ENCODE measurements at regions of chr3 and their contacts with region 1.

Region 1: DNA sequence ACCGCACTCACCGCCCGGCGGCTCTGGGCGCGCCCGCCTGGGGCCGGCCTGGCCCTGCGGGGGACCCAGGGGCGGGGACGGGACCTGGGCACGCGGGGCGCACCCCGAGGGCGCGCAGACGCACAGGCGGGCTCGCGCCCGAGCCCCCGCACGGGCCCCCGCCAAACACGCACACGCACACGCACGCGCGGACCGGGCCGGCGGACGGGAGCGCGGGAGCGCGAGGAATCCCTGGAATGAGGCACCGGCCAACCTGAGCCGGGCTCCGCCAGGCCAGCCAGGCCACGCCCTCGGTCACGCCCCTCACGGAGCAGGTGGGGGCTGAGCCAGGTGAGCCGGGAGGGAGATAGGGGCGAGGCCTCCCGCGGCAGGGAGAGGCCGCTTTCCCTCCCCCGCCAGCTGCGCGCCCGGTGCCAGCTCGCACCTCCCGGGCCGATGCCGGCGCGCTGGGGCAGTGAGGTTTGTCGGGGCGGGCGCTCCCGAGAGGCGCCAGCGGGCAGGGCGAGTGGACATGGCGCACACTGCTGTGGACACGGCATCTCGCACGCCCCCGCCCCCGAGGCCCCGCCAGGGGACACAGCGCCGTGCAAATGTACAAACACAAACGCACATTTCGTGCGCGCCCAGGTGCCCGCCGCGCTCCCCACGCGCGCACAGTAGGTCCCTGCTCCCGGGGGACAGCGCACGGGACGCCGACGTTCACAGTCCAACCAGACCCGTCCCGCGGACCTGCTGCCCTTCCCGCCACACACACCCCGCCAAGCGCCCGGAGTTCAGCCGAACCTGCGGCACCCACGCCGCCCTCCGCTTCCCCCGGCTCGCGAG is 75.9 kb upstream of the VGLL4 start:
- DNase-seq: peak; percentile 85
- ATAC-seq: peak; percentile 80

Region 2: DNA sequence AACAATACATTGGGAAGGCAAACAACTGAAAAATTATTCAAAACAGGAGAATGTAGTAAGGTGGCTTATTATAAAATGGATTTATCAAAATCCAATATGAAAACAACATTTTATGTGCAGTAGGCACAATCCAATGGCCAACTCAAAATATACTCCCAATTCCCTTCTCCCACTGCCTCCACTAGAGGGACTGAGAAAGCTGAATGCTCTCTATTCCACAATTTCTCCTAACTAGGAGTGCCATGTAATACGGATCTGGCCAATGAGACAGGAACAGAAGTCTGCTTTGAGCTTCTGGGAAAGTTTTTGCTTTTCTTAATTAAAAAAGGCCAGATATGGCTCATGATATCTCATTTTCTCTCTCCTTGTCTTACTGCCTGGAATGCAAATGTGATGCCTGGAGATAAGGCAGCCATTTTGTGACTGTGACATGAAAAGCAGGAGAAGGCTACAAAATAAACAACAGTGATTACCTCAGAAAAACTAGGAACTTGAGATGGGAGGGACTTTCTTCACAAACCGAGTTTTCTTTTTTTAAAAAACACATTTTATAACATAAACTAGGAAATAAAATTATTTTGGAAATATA is 57.1 kb before region 1 on chr3:
- intact Hi-C with region 1: loop called (anchors 5 kb)
- DNase-seq: no peak
- ATAC-seq: no peak

Region 3: DNA sequence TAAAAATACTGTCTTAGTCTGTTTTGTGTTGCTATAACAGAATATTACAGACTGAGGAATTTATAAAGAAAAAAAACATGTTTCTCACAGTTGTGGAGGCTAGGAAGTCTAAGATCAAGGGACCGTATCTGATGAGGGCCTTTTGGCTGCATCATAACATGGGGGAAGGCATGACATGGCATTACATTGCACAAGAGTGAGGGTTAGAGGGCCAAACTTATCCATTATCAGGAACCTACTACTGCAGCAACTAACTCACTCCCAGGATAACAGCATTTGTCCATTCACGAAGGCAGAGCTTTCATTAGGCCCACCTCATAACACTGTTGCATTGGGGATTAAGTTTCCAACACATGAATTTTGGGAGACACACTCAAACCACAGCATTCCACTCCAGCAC is 314.8 kb after region 1 on chr3:
- intact Hi-C with region 1: no loop called
- DNase-seq: no peak
- ATAC-seq: no peak

Measured in Right ventricle myocardium inferior (tissue), 1 donor.